ENCODE measurements at regions of chr10 and their contacts with region 1.

Region 1: DNA sequence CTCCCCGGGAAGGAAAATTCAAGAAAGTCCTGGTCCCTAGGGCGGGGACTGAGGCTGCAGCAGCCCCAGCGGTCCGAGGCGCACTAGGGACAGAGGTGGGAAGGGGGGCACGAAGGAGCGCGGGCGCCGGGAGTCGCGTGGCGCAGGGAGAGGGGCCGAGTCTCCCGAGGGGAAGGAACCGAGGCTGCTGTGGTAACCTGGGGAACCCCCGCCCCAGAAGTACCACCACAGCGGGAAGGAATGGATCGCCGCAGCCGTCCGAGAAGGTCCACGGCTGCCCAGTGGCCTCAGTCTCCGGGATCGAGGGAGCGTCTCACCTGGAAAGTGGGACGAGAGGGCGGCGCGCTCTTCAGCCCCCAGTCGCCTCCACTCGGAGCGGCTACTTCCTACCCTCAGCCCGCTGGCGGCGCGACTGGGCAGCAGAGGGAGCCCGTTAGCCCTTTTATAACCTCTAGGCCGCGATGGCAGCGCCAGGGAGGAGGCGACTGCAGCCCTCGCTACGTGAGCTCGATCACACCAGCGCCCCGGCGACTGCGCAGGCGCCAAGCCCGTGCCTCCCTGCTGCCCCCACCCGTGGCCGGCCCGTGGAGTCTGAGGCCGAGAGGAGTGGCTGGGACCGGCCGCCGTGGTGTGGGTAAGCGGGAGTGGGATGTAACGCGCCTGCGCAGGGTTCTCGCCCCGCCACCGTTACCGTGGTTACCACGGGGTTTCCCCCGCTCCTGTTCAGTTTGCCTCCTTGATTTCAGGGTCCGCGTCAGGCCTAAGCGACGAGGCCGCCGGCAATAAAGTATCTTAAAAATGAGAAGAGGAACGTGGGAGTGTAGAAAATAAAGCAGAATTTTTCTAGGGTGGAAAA is at the start of gene P4HA1:
- DNase-seq: peak; percentile 95
- ATAC-seq: peak; percentile 92
- H3K4me3 Mint-ChIP-seq: peak within 1 kb of the TSS; percentile 96
- H3K27ac Mint-ChIP-seq: peak within 1 kb of the TSS; percentile 88
- H3K4me1 Mint-ChIP-seq: peaks cover 30% of the 10 kb centered on the region
- H3K27me3 Mint-ChIP-seq: no peaks in the 10 kb centered on the region
- CTCF ChIP-seq: peak; percentile 23
- total RNA-seq, gene P4HA1: 19.8 and 20.5 TPM in 2 replicates

Region 2: DNA sequence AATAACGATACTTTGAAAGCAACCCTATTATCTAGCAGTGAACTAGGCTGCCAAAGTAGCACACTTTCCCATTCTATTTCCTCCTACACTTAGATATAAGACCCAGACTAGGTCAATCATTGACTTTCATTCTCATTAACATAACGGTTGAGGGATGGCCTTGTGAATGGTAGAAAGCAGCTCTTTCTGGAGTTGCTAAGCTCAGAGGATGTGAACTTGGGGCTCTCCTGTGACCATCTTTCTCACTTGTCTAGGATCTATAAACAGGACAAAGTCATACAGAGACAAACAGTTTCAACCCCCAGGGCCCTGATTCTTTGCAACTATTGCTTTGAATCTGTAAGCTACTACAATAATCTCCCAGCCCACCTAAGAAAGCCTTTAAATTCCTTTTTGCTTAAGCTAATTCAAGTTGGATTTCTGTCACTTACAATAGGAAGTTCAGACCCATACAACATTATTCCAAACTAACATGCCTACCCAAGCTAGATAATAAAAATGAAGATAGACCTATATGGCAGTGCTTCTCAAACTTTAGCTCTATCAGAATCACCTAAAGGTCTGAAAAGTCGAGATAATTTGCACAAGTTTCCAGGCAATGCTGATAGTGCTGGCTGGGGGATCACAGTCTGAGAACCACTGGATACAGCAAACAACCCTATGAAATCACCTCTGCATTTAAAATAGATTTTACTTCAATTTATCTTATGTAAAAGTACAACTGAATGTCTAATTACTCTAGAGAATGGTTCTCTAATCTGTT is 16.7 kb before region 1 on chr10:
- CTCF ChIA-PET with region 1: interaction called, 3 read pairs
- POLR2A ChIA-PET with region 1: interaction called, 3 read pairs
- intact Hi-C with region 1: loop called (anchors 2 kb)
- DNase-seq: no peak
- ATAC-seq: no peak
- H3K4me3 Mint-ChIP-seq: no peak overlapping the region
- H3K27ac Mint-ChIP-seq: no peak overlapping the region
- H3K4me1 Mint-ChIP-seq: peaks cover 15% of the 10 kb centered on the region
- H3K27me3 Mint-ChIP-seq: no peaks in the 10 kb centered on the region
- CTCF ChIP-seq: no peak

Region 3: DNA sequence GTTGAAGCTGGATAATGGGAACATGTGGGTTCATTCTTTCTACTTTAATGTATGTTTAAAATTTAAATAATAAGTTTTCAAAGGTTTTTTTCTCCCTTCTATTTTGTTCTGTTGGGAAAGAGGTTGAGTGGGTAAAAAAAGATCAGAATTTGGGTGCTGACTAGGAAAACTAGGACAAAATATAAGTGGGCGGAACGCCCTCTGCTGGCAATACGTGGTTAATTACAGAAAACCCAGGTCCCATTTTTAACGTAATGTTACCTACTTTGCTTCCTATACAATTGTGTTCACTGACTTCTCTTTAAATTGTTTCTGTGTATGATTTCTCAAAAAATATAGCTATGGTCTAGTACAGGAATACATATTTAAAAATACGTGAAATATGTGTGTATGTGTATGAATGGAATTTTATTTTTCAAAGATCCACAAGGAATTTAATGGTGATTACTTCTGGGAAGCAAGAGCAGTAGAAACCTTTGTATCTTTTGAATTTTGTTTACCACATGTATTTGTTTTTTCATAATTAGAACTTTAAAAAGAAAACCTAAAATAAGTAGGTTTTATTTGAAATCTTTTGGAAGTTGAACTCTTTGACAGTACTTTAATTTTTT is 62.5 kb after region 1 on chr10:
- CTCF ChIA-PET with region 1: interaction called, 42 read pairs
- POLR2A ChIA-PET with region 1: interaction called, 9 read pairs
- intact Hi-C with region 1: loop called (anchors 1 kb)
- DNase-seq: peak; percentile 23
- ATAC-seq: peak; percentile 37
- H3K4me3 Mint-ChIP-seq: no peak overlapping the region
- H3K27ac Mint-ChIP-seq: no peak overlapping the region
- H3K4me1 Mint-ChIP-seq: peaks cover 18% of the 10 kb centered on the region
- H3K27me3 Mint-ChIP-seq: no peaks in the 10 kb centered on the region
- CTCF ChIP-seq: peak; percentile 70

Region 4: DNA sequence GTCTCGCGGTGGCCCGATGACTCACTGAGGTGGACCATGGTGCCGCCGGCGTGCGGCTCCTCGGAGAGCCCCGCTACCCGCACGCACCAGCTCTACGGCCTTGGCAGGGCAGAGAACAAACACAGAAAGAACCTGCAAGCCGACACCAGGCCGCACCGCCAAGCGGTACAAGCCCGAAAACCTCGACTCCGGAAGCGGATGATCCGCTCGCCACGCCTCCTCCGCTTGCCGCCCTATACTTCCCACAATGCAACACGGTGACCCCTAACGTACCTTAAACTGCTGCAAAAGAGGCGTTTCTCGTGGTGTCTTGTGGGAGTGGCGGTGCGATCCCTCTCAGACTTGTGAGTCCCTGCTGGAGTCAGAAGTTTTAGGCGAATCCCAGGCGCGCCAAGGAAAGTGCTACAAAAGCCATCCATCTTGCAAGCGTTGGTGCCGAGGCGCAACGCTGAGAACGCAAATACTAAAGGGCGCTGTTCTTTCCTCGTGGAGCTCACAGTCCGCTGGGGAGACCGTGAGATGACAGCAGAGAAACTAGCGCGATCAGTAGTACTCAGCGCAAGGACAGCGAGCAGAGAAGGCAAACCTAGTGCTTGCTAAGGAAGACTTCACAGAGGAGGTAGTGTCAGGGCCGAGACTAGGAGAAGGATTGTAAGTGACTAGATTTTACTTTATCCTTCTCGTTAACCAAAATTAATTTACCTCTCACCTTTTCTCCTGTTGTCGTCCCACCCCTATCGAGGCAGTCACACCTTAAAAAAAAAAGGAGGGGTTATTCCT is 156.0 kb after region 1 on chr10 and contains the start of gene MRPS16:
- CTCF ChIA-PET with region 1: interaction called, 3 read pairs
- POLR2A ChIA-PET with region 1: interaction called, 16 read pairs
- intact Hi-C with region 1: loop called (anchors 1 kb)
- DNase-seq: peak; percentile 84
- ATAC-seq: peak; percentile 89
- H3K4me3 Mint-ChIP-seq: peak within 1 kb of the TSS; percentile 99
- H3K27ac Mint-ChIP-seq: peak within 1 kb of the TSS; percentile 95
- H3K4me1 Mint-ChIP-seq: peaks cover 44% of the 10 kb centered on the region
- H3K27me3 Mint-ChIP-seq: no peaks in the 10 kb centered on the region
- CTCF ChIP-seq: no peak
- total RNA-seq, gene MRPS16: 85.9 and 88.5 TPM in 2 replicates

Region 5: DNA sequence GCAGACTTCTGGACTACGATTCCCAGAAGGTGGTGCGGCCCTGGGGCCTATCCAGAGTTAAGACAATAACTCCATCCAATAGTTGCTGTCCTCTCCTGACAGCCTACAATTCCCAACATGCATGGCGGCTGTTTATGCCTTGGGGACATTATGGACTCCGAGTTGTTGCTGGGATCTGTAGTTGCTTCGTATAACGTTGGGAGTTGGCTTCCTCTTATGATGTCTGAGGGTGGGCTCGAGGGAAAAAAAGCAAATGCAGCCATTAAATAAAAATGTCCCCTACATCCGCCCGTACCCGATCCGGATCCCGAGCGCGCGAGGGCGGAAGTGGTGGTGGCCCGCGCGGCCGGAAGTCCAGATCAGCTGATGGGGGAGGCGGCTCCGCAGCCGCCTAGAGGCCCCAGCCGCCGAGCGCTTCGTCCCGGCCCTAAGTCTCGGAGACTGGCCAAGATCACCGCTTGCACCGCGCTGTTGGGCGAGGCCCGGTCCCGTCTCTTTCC is 688.6 kb after region 1 on chr10 and contains the start of gene ZSWIM8:
- CTCF ChIA-PET with region 1: no interaction called
- POLR2A ChIA-PET with region 1: interaction called, 3 read pairs
- intact Hi-C with region 1: loop called (anchors 2 kb)
- DNase-seq: peak; percentile 78
- ATAC-seq: peak; percentile 88
- H3K4me3 Mint-ChIP-seq: peak within 1 kb of the TSS; percentile 99
- H3K27ac Mint-ChIP-seq: peak within 1 kb of the TSS; percentile 98
- H3K4me1 Mint-ChIP-seq: peaks cover 57% of the 10 kb centered on the region
- H3K27me3 Mint-ChIP-seq: no peaks in the 10 kb centered on the region
- CTCF ChIP-seq: no peak
- total RNA-seq, gene ZSWIM8: 67.5 and 93.0 TPM in 2 replicates